ENCODE measurements at regions of chr7 and their contacts with region 1.

Region 1: DNA sequence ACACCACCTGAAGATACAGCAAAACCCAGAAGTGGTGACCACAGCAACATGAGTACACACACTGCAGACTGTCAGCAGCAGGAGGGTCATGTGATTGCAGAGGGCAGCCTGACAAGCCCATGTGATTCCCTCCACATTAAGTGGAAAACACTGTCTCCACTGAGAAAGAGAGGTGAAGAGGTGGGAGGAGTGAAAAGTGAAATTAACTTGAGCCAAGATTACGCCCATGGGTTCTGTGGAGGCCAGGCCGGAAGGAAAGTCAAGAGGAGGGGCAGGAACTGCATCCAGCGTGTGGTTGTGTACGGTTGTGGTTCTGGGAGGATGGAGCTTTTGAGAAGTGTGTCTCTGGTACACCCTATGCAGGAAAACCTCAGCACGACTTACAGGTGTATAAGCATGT is 138.5 kb downstream of the PLXNA4 start:
- DNase-seq: peak in 2 of 5 donors; percentile 23 to 43
- ATAC-seq: peak in 3 of 4 donors; percentile 12 to 51 (median 14)
- H3K4me3 ChIP-seq: no peak overlapping the region
- H3K27ac ChIP-seq: peak overlapping the region in 3 of 12 donors; percentile 3 to 17 (median 14)
- H3K4me1 ChIP-seq: peaks cover 0 to 69% (median 21%) of the 10 kb centered on the region in 12 donors
- H3K27me3 ChIP-seq: no peaks in the 10 kb centered on the region
- CTCF ChIP-seq: no peak
- POLR2A ChIP-seq: no peak

Region 2: DNA sequence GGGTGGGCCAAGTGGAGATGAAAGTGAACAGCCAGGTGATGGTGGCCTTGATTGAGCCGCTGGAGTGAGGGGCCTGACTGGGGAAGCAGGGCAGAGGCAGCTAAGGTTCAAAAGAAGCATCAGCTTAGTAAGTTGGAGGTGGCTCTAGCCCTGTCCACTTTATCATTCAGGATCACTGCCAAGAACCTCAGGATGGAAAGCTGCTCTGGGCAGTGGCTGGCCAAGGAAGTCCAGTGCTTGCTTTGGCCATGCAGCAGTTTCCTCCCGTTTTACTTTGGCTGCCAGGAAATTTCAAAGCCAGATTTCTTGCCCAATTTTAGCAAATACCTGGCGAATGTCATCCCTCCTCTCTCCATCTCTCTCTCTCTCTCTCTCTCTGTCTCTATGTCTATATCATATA is 246.3 kb before region 1 on chr7:
- intact Hi-C with region 1: no loop called
- DNase-seq: no peak
- ATAC-seq: peak in 2 of 4 donors; percentile 62 to 65
- H3K4me3 ChIP-seq: no peak overlapping the region
- H3K27ac ChIP-seq: no peak overlapping the region
- H3K4me1 ChIP-seq: peaks cover 0 to 3% (median 0%) of the 10 kb centered on the region in 12 donors
- H3K27me3 ChIP-seq: no peaks in the 10 kb centered on the region
- CTCF ChIP-seq: no peak
- POLR2A ChIP-seq: no peak

Region 3: GRCh38 chr7:132472463-132473120 is 34.9 kb after region 1 on chr7:
- intact Hi-C with region 1: loop called in 1 of 10 experiments (anchors 5 kb)
- DNase-seq: peak; percentile 70 to 88 (median 80)
- ATAC-seq: peak; percentile 96 to 98 (median 96)
- H3K4me3 ChIP-seq: no peak overlapping the region
- H3K27ac ChIP-seq: peak overlapping the region; percentile 45 to 94 (median 86)
- H3K4me1 ChIP-seq: peaks cover 0 to 54% (median 36%) of the 10 kb centered on the region in 12 donors
- H3K27me3 ChIP-seq: no peaks in the 10 kb centered on the region
- CTCF ChIP-seq: no peak
- POLR2A ChIP-seq: no peak

Measured in heart left ventricle (tissue), 16 donors.